Common myeloid progenitor, CD34-positive (primary cell): ENCODE measurements at regions of chr2 and their contacts with region 1.

Region 1: DNA sequence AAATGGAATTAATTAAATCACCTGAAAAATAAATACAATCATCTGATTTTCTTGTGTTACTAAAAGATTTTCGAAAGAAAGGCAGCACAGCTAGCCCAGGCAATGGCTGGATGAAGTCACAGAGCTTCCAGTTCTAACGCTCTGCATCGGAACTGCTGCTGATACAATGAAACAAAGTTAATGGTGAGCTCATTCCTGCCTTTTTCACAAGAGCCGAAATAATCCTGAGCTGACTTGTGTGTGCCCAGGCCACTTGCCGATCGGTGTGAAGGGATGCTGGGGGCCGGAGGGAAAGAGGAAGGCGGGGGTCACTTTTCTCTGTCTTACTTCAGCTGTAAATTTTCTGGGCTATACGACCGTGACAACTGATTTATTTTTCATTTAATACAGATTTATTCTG is 149.5 kb downstream of the INO80D start:
- DNase-seq: no peak
- H3K4me3 ChIP-seq: no peak overlapping the region
- H3K27ac ChIP-seq: no peak overlapping the region
- H3K4me1 ChIP-seq: no peaks in the 10 kb centered on the region
- H3K27me3 ChIP-seq: no peaks in the 10 kb centered on the region

Region 2: DNA sequence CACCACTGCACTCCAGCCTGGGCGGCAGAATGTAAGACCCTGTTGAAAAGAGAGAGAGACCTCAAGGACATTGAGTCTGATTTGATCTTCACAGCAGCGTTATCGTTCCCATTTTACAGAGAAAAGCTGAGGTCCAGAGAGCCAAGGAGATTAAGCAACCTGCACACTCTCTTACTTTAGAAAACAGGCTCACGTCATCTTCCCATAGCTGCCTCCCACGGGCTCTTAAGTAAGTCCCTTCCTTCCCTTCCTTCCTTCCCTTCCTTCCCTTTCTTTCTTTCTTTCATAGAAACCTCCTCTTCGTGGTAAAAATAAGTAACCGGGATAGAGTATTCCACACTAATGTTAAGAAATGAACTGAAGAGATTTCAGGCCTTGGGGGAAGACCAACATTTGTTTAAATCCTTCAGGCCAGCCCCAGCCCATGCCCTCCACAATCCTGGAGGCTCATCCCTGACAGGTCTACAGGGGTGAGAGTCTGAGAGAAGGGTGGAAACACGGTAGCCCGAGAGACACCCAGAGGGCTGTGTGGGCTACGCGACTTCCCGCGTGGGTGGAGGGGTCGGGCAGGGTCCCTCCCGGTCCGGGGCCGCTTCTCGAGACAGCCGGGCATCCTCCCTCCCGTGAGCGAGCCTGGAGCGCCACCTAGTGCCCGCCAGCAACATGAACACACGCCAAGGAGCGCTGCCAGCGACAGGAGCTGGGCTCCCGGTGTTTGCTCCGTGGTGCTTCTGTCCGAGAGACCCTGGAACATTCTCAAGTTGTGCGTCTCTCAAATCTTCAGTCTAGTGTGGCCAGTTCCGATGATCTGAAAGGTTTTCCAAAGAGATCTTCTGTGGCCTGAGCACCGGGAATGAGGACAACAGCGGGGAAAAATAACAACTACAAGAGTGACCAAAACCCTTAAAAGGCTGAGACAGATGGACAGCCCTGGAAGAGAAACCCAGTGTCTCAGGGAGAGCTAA is 10.8 kb before region 1 on chr2:
- CTCF ChIA-PET with region 1: interaction called, 10 read pairs
- POLR2A ChIA-PET with region 1: no interaction called
- DNase-seq: peak; percentile 67 to 79 (median 77)
- H3K4me3 ChIP-seq: peak overlapping the region in 3 of 7 experiments; percentile 40 to 54 (median 41)
- H3K27ac ChIP-seq: no peak overlapping the region
- H3K4me1 ChIP-seq: peaks cover 0 to 8% (median 6%) of the 10 kb centered on the region in 4 experiments
- H3K27me3 ChIP-seq: peaks cover 5 to 33% (median 25%) of the 10 kb centered on the region in 5 experiments